Breast epithelium (tissue), 4 donors: ENCODE measurements at regions of chr3 and their contacts with region 1.

Region 1: GRCh38 chr3:161672478-161672877 is 175.9 kb downstream of the OTOL1 start:
- DNase-seq: no peak
- H3K4me3 ChIP-seq: no peak overlapping the region
- H3K27ac ChIP-seq: no peak overlapping the region
- H3K4me1 ChIP-seq: no peaks in the 10 kb centered on the region
- H3K27me3 ChIP-seq: no peaks in the 10 kb centered on the region
- CTCF ChIP-seq: no peak
- POLR2A ChIP-seq: no peak

Region 2: GRCh38 chr3:160049565-160049964 is 1622.9 kb before region 1 on chr3:
- intact Hi-C with region 1: loop called (anchors 10 kb)
- DNase-seq: no peak
- H3K4me3 ChIP-seq: no peak overlapping the region
- H3K27ac ChIP-seq: no peak overlapping the region
- H3K4me1 ChIP-seq: no peaks in the 10 kb centered on the region
- H3K27me3 ChIP-seq: no peaks in the 10 kb centered on the region
- CTCF ChIP-seq: no peak
- POLR2A ChIP-seq: no peak